PC-3 (cell line): ENCODE measurements at regions of chr13 and their contacts with region 1.

Region 1: GRCh38 chr13:26062844-26063444 is 11.1 kb upstream of the SHISA2 start:
- DNase-seq: peak; percentile 76
- ATAC-seq: peak; percentile 66
- H3K4me3 ChIP-seq: no peak overlapping the region
- H3K27ac ChIP-seq: 0 out of 2 replicates have a peak overlapping the region, but pooled peaks have one; percentile 40
- H3K4me1 ChIP-seq: peaks cover 22% of the 10 kb centered on the region
- H3K27me3 ChIP-seq: no peaks in the 10 kb centered on the region
- CTCF ChIP-seq: peak; percentile 90

Region 2: DNA sequence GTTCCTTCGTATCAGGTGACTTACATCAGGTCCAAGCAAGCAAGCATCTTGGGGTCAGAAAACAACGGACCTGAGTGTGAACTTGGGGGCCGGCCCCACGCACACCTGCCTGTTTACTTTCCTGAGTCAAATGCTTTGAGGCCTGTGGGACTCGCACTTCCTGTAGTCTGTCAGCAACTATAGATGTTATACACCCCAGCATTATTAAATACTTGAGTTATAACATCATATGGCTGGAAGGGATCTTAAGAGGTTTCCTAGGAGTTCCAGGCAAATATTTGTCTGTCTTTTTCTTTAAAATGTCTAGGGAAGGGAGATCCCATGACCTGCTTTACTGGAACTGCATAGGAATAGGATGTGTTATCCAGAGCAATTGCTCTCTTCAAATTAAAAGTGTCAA is 291.7 kb before region 1 on chr13:
- CTCF ChIA-PET with region 1: no interaction called
- POLR2A ChIA-PET with region 1: no interaction called
- intact Hi-C with region 1: loop called (anchors 10 kb)
- DNase-seq: peak; percentile 84
- ATAC-seq: peak; percentile 84
- H3K4me3 ChIP-seq: no peak overlapping the region
- H3K27ac ChIP-seq: peak overlapping the region; percentile 84
- H3K4me1 ChIP-seq: peaks cover 20% of the 10 kb centered on the region
- H3K27me3 ChIP-seq: no peaks in the 10 kb centered on the region
- CTCF ChIP-seq: no peak

Region 3: DNA sequence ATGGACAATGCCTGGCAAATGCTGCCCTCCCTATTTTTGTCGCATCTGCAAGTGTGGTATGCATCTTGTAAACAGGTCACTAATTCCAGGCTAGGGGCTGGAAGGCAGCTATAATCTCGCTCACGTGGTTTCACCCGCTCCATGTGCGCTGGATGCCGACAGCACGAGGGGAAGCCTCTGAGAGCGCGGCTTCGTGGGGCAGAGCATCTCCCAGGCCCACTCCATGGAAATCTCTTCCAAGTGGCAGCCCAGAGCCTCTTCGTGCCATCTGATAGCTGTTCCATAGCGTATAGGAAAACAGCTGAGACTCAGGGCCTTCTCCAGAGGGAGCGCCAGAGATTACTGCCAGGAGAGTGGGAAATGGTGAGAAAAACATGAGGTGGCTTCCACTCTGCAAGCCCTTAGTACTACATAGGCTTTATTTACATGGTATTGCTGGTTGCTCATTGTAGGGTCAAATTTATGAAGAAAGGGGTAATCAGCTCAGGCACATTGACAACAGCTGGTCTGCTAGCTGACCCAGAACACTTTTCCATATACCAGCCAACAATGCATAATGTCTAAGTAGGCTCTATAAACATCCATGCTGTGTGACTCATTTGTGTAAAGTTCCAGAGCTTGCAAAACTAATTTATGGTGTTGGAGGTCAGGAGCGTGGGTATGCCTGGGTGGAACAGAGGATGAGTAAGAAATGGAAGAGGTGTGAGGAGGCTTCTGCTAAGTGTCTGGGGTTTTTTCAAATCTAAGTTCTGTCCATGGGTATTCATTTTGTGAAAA is 176.3 kb before region 1 on chr13:
- CTCF ChIA-PET with region 1: no interaction called
- POLR2A ChIA-PET with region 1: no interaction called
- intact Hi-C with region 1: loop called (anchors 1 kb)
- DNase-seq: peak; percentile 91
- ATAC-seq: peak; percentile 97
- H3K4me3 ChIP-seq: no peak overlapping the region
- H3K27ac ChIP-seq: peak overlapping the region; percentile 81
- H3K4me1 ChIP-seq: peaks cover 20% of the 10 kb centered on the region
- H3K27me3 ChIP-seq: no peaks in the 10 kb centered on the region
- CTCF ChIP-seq: peak; percentile 21; the same call in 1 of the 2 replicates

Region 4: GRCh38 chr13:25980255-25980654 is 82.7 kb before region 1 on chr13:
- CTCF ChIA-PET with region 1: no interaction called
- POLR2A ChIA-PET with region 1: no interaction called
- intact Hi-C with region 1: loop called (anchors 2 kb)
- DNase-seq: peak; percentile 47
- ATAC-seq: peak; percentile 68
- H3K4me3 ChIP-seq: no peak overlapping the region
- H3K27ac ChIP-seq: no peak overlapping the region
- H3K4me1 ChIP-seq: peaks cover 4% of the 10 kb centered on the region; the same call in 1 of the 2 replicates
- H3K27me3 ChIP-seq: no peaks in the 10 kb centered on the region
- CTCF ChIP-seq: peak; percentile 55

Region 5: DNA sequence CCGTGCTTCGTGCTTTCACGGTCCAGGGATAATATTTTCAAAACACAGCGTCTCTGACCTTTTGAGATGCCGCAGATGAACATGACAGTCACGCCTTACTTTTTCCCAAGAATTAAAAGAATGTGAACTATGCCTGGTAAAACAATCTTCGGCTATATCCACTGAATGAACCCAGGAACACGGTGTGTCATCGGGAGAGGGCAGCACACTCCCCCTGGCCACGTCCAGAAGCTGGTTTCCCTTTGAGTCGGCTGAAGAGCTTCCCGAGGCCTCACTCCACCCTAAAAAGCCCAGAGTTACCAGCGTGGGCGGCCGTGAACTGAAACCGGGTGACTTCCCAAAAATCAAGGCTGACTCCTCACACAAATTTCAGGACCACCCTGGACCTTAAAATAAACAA is 11.8 kb after region 1 on chr13:
- CTCF ChIA-PET with region 1: no interaction called
- POLR2A ChIA-PET with region 1: no interaction called
- intact Hi-C with region 1: no loop called
- DNase-seq: peak; percentile 24
- ATAC-seq: no peak
- H3K4me3 ChIP-seq: no peak overlapping the region
- H3K27ac ChIP-seq: no peak overlapping the region
- H3K4me1 ChIP-seq: no peaks in the 10 kb centered on the region
- H3K27me3 ChIP-seq: peaks cover 16% of the 10 kb centered on the region
- CTCF ChIP-seq: no peak